ENCODE measurements at regions of chr1 and their contacts with region 1.

Region 1: GRCh38 chr1:172167796-172168596 is 252.5 kb upstream of the C1orf105 start:
- DNase-seq: peak; percentile 62
- H3K4me3 Mint-ChIP-seq: peak overlapping the region; percentile 27
- H3K27ac Mint-ChIP-seq: peak overlapping the region; percentile 58
- H3K4me1 Mint-ChIP-seq: peaks cover 73% of the 10 kb centered on the region
- H3K27me3 Mint-ChIP-seq: no peaks in the 10 kb centered on the region
- CTCF ChIP-seq: no peak

Region 2: GRCh38 chr1:171929121-171929520 is 238.9 kb before region 1 on chr1:
- CTCF ChIA-PET with region 1: no interaction called
- intact Hi-C with region 1: no loop called
- DNase-seq: no peak
- H3K4me3 Mint-ChIP-seq: no peak overlapping the region
- H3K27ac Mint-ChIP-seq: no peak overlapping the region
- H3K4me1 Mint-ChIP-seq: no peaks in the 10 kb centered on the region
- H3K27me3 Mint-ChIP-seq: no peaks in the 10 kb centered on the region
- CTCF ChIP-seq: no peak

Region 3: DNA sequence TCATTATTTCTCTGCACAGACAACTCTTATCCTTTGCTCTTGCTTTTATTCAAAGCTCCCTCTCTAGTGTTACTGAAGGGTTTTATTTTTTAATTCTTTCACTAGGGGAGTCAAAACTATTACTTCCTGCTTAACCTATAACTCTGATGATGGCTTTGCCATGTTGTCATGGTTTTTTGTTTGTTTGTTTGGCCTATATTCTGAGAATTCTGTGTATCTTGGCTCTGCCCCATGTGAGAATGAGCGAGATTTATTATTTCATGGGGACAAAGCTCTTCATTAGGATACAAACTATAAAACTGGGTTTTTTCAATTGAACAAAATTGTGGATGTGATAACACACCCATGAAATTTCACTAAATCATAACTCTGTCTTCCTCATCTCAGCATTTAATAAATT is 61.9 kb after region 1 on chr1:
- CTCF ChIA-PET with region 1: no interaction called
- intact Hi-C with region 1: no loop called
- DNase-seq: no peak
- H3K4me3 Mint-ChIP-seq: no peak overlapping the region
- H3K27ac Mint-ChIP-seq: no peak overlapping the region
- H3K4me1 Mint-ChIP-seq: no peaks in the 10 kb centered on the region
- H3K27me3 Mint-ChIP-seq: no peaks in the 10 kb centered on the region
- CTCF ChIP-seq: no peak

Region 4: DNA sequence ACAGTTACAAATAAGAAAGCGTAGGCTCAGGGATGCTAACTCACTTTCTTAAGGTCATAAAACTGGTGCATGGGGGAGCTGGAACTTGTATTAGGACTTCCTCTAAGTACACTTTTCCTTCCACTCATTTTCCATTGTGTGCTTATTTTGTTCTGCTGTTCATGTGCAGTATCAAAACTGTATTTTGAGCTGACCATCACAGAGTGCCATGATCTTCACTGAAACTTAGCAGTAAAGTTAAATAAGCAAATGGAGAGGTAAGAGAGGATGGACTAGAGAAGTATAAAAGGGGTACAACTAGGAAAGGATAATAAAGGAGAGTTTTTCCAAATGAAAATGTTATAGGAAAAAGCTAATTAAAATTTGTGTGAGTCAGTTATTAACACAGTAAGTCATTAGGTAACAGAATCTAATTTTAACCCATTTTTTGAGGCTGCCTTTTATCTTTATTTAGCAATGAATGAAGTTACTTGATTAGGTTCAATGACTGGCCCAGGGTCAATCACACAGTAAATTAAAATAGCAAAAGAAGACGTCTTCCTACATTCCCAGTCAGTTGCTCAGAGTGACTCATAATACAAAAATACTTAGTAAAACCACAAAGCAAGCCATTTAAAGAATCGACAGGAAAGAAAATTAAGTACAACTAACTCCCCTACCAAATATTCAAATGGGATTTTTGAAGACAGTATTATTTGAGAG is 86.7 kb after region 1 on chr1:
- CTCF ChIA-PET with region 1: no interaction called
- intact Hi-C with region 1: loop called (anchors 5 kb)
- DNase-seq: peak; percentile 24
- H3K4me3 Mint-ChIP-seq: no peak overlapping the region
- H3K27ac Mint-ChIP-seq: peak overlapping the region; percentile 32
- H3K4me1 Mint-ChIP-seq: peaks cover 30% of the 10 kb centered on the region
- H3K27me3 Mint-ChIP-seq: no peaks in the 10 kb centered on the region
- CTCF ChIP-seq: no peak

Region 5: GRCh38 chr1:172408958-172409357 is 241.0 kb after region 1 on chr1:
- CTCF ChIA-PET with region 1: no interaction called
- intact Hi-C with region 1: no loop called
- DNase-seq: no peak
- H3K4me3 Mint-ChIP-seq: no peak overlapping the region
- H3K27ac Mint-ChIP-seq: no peak overlapping the region
- H3K4me1 Mint-ChIP-seq: no peaks in the 10 kb centered on the region
- H3K27me3 Mint-ChIP-seq: no peaks in the 10 kb centered on the region
- CTCF ChIP-seq: no peak

Measured in Calu3 (cell line).